Activated naive CD8-positive, alpha-beta T cell treated with anti-CD3 and anti-CD28 coated beads, Interleukin-2, amount 10 ng/mL, durations not matched to agents 7 days and 5 days (primary cell): ENCODE measurements at regions of chr17 and their contacts with region 1.

Region 1: GRCh38 chr17:76868176-76868668 is at the start of gene MGAT5B:
- DNase-seq: peak; percentile 93
- ATAC-seq: peak; percentile 94
- H3K4me3 Mint-ChIP-seq: peak within 1 kb of the TSS; percentile 75
- H3K27ac Mint-ChIP-seq: no peak within 1 kb of the TSS
- H3K4me1 Mint-ChIP-seq: peaks cover 9% of the 10 kb centered on the region
- H3K27me3 Mint-ChIP-seq: peaks cover 36% of the 10 kb centered on the region
- total RNA-seq, gene MGAT5B: 0.43 to 0.47 TPM

Region 2: DNA sequence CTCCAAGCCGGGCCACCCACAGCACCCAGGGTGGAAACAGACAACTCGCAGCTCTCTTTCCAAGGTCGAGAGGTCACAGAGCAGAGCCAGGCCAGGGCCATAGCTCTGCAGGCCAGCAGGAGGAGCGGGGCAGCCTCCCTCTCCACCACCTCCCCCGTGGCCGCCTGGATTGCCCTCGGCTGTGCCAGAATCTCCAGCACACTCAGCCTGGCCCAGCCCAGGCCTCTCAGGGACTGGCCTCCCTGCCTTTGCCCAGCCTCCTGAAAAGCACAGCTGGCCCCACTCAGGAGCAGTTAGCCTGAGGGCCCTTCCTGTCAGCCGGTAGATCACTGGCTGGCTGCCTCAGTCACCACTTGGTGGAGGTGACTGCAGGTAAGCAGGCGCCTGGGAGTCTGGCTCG is 186.7 kb after region 1 on chr17:
- POLR2A ChIA-PET with region 1: interaction called, 12 read pairs
- DNase-seq: no peak
- ATAC-seq: no peak
- H3K4me3 Mint-ChIP-seq: no peak overlapping the region
- H3K27ac Mint-ChIP-seq: no peak overlapping the region
- H3K4me1 Mint-ChIP-seq: peaks cover 1% of the 10 kb centered on the region
- H3K27me3 Mint-ChIP-seq: peaks cover 10% of the 10 kb centered on the region